PC-9 (cell line): ENCODE measurements at regions of chr6 and their contacts with region 1.

Region 1: DNA sequence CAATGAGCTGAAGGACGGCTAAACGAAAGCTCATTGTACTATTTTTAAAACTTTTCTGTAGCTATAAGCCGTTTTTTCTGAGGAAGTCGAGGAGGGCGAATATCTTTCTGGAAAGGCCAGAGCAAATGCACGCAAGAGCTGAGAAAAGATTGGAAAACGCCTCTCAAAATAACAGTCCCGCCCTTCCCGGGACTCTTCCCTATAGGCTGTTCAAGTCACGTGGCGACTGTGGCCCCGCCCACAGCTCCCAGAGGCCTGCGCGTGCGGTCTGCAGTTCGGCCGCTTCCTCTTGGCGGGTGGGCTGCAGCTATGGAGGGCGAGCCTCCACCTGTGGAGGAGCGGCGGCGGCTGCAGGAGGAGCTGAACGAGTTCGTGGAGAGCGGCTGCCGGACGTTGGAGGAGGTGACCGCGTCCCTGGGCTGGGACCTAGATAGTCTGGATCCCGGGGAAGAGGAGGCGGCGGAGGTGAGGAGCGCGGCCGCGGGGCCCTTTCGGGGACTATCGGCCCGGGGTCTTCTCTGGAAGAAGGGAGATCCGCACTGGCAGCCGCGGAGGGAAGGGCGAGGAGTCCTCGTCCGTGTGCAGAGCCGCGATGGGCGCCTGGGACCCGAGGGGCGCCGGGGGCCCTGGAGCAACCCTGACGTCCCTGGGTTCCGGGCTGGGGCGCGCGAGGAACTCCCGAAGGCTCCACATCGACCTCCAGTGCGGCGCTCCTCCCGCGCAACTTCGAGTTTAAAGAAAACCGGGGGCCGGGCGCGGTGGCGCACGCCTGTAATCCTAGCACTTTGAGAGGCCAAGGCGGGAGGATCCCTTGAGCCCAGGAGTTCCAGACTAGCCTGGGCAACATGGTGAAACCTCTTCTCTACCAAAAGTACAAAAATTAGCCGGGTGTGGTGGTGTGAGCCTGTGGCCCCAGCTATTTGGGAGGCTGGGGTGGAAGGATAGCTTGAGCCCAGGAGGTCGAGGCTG is at the start of gene SNRNP48:
- DNase-seq: peak; percentile 78 to 93
- H3K4me3 ChIP-seq: peak within 1 kb of the TSS; percentile 93
- H3K27ac ChIP-seq: no peak within 1 kb of the TSS
- H3K4me1 ChIP-seq: peaks cover 18% of the 10 kb centered on the region; the same call in 1 of the 2 replicates
- H3K27me3 ChIP-seq: no peaks in the 10 kb centered on the region
- CTCF ChIP-seq: no peak
- total RNA-seq, gene SNRNP48: 18.6 and 21.7 TPM in 2 replicates

Region 2: GRCh38 chr6:6960571-6961251 is 629.5 kb before region 1 on chr6:
- CTCF ChIA-PET with region 1: no interaction called
- POLR2A ChIA-PET with region 1: interaction called, 12 read pairs
- intact Hi-C with region 1: no loop called
- DNase-seq: peak; percentile 56 to 67
- H3K4me3 ChIP-seq: no peak overlapping the region
- H3K27ac ChIP-seq: no peak overlapping the region
- H3K4me1 ChIP-seq: no peaks in the 10 kb centered on the region; the same call in 1 of the 2 replicates
- H3K27me3 ChIP-seq: no peaks in the 10 kb centered on the region
- CTCF ChIP-seq: no peak

Region 3: GRCh38 chr6:7295916-7296315 is 294.3 kb before region 1 on chr6:
- CTCF ChIA-PET with region 1: no interaction called
- POLR2A ChIA-PET with region 1: no interaction called
- intact Hi-C with region 1: loop called (anchors 5 kb)
- DNase-seq: no peak
- H3K4me3 ChIP-seq: no peak overlapping the region
- H3K27ac ChIP-seq: no peak overlapping the region
- H3K4me1 ChIP-seq: no peaks in the 10 kb centered on the region
- H3K27me3 ChIP-seq: no peaks in the 10 kb centered on the region
- CTCF ChIP-seq: no peak

Region 4: DNA sequence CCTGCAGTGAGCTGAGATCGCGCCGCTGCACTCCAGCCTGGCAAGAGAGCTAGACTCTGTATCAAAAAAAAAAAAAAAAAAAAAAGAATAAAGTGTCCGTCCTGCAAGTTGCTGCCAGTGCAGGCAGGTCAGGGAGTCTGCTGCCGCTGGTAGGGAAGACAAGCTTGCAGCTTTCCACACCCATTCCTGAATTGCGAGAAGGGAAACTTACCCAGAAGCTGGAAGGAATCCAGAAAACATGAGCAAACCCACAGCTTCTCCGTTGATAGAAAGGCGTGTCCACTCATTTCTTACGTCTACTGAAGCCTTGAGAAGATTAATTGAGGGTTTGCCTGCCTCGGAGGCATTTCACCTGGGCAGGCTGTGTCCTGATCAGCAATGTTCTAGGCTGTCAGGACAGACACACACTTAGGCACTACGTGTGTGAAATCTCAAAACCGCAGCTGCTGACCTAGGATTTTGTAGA is 110.4 kb before region 1 on chr6:
- CTCF ChIA-PET with region 1: no interaction called
- POLR2A ChIA-PET with region 1: interaction called, 18 read pairs
- intact Hi-C with region 1: no loop called
- DNase-seq: peak; percentile 83 to 95
- H3K4me3 ChIP-seq: peak overlapping the region; percentile 37; the same call in 1 of the 2 replicates
- H3K27ac ChIP-seq: peak overlapping the region; percentile 35; the same call in 1 of the 2 replicates
- H3K4me1 ChIP-seq: no peaks in the 10 kb centered on the region
- H3K27me3 ChIP-seq: no peaks in the 10 kb centered on the region
- CTCF ChIP-seq: no peak

Region 5: GRCh38 chr6:7615611-7616383 is 25.6 kb after region 1 on chr6:
- CTCF ChIA-PET with region 1: no interaction called
- POLR2A ChIA-PET with region 1: no interaction called
- intact Hi-C with region 1: no loop called
- DNase-seq: peak; percentile 47
- H3K4me3 ChIP-seq: no peak overlapping the region
- H3K27ac ChIP-seq: no peak overlapping the region
- H3K4me1 ChIP-seq: peaks cover 7% of the 10 kb centered on the region
- H3K27me3 ChIP-seq: no peaks in the 10 kb centered on the region
- CTCF ChIP-seq: peak; percentile 74